ENCODE measurements at regions of chr9 and their contacts with region 1.

Region 1: DNA sequence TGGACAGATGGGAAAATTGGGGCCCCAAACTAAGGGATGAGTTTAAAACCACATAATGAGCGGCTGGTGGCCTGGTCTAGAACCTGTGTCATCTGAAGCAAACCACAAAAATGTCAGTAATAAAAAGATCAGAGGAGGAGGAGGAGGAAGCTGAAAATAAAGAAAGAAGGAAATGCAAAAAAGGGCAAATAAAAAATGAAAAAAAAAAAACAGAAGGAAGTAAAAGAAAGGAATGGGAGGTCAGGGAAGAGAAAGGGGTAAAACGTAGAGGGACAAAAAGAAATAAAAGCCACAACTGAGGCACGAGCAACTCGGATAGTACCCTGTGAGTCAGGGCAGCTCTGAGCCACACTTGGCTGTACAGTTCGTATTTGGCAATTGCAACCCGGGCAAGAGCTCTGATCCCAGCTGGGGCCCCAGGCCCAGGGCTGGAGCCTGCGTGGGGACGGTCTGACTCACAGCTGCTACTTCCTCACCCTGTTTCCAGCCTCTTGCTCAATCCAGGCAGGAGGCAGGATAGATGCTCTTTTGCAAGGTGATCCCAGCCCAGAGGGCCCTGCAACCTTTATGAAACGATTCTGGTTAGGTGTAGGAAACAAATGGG is 137.9 kb upstream of the TRIM32 start:
- DNase-seq: peak; percentile 83
- ATAC-seq: peak; percentile 95
- H3K4me3 ChIP-seq: peak overlapping the region in 1 of 2 experiments; percentile 18; a peak in 2 of 4 replicates
- H3K27ac ChIP-seq: peak overlapping the region; percentile 17; the same call in 1 of the 2 replicates
- H3K4me1 ChIP-seq: peaks cover 20 to 37% of the 10 kb centered on the region in 2 experiments
- H3K27me3 ChIP-seq: peaks cover 3% of the 10 kb centered on the region; the same call in 1 of the 2 replicates
- CTCF ChIP-seq: no peak
- POLR2A ChIP-seq: no peak
- RAD21 ChIP-seq: no peak; the same call in 1 of the 2 replicates

Region 2: DNA sequence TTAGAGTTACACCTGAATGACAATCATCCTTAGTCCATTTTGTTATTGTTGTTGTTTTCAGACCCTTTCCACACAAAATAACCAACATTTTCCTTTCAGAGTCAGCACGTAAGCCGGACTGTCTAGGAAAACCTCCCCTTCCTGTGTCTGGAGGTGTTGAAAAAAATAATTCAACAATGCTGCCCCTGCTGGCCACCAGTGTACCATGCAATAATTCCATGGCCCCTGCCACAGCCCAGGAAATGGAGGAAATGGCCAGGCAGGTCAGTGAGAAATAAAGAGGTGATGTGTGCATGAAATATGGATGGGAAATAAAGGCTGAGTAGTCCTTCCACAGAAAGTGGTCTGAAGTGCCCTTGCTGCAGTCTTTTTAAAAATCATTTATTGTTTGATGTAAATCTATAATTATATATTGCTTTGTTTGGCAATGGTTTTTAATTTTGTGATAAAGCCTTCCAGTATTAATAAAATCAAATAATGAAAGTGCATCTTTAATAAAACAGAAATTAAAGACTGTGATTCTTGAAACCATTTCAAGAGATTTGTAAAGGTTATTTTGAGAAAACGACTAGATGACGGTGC is 548.3 kb before region 1 on chr9:
- CTCF ChIA-PET with region 1: no interaction called
- POLR2A ChIA-PET with region 1: no interaction called
- RAD21 ChIA-PET with region 1: no interaction called
- intact Hi-C with region 1: loop called (anchors 10 kb)
- DNase-seq: peak; percentile 48
- ATAC-seq: peak; percentile 96
- H3K4me3 ChIP-seq: no peak overlapping the region
- H3K27ac ChIP-seq: no peak overlapping the region
- H3K4me1 ChIP-seq: peaks cover 5 to 31% of the 10 kb centered on the region in 2 experiments; a peak in 2 of 4 replicates
- H3K27me3 ChIP-seq: no peaks in the 10 kb centered on the region
- CTCF ChIP-seq: peak; percentile 27 to 89 (median 70); a peak in 5 of 6 replicates
- POLR2A ChIP-seq: no peak
- RAD21 ChIP-seq: peak; percentile 51; the same call in 1 of the 2 replicates

Region 3: DNA sequence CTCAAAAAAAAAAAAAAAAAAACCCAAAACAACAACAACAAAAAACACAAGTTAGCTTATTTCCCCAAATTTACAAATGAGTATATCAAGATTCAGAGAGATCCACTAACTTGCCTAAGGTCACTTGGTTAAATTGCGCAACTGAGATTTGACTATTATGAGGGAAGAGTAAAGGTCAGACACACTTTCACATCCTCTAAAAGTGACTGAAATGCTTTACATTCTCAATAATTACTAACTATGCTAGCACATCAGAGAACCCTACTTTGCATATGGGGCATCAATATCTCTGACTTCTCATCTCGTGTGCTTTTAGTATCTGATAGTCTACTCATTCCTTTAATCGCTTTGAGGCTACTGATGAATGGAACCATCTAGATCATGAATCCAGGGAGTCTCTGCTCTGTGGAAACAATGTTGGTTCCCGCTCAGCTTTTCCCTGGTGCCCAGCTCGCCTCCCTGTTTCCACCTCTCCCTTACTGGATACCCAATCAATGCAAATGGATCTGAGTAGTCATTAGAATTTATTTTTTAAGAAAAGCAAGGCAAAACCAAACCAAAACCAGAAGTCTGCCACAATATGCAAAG is 44.2 kb before region 1 on chr9:
- CTCF ChIA-PET with region 1: no interaction called
- POLR2A ChIA-PET with region 1: no interaction called
- RAD21 ChIA-PET with region 1: no interaction called
- intact Hi-C with region 1: loop called (anchors 5 kb)
- DNase-seq: no peak
- ATAC-seq: no peak
- H3K4me3 ChIP-seq: no peak overlapping the region
- H3K27ac ChIP-seq: no peak overlapping the region
- H3K4me1 ChIP-seq: peaks cover 0 to 33% of the 10 kb centered on the region in 2 experiments; a peak in 2 of 4 replicates
- H3K27me3 ChIP-seq: no peaks in the 10 kb centered on the region
- CTCF ChIP-seq: no peak
- POLR2A ChIP-seq: no peak
- RAD21 ChIP-seq: no peak